Activated CD4-positive, alpha-beta T cell treated with anti-CD3 and anti-CD28 coated beads for 36 hours (primary cell): ENCODE measurements at regions of chr14 and their contacts with region 1.

Region 1: DNA sequence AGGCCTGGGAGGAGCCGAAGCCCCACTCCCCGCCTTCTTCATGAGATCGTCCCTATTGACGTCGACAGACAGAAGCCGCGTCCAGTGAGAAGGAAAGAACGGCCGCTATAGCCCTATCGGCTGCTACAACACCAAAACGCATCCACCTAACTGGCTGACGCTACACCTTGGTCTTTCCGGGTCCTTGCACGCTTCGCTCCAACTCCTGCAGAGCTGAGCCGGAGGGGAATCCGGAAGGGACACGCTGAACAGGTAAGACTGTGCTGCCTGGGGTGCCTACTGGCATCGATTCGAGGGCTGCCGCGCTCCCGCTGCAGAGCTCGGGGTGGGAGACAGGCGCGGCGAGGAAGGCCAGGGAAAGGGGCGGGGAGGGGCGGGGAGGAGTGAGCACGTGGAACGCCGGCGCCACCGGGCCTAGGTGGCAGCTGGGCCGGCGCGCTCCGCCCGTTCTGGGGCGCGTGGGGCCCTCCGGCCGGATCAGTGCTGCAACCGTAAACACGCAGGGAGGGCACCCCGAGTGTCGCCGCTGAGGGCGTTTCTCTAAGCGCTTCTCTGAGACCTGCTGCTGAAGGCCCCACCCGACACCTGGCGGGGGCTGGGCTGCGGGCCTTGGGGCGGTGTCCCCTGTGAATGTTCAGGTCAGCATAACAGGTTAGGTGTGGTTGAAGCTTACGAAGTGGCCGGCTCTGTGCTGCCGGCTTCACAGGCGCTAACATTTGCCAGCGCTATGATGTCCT is at the start of gene DCAF4:
- DNase-seq: peak; percentile 96
- ATAC-seq: peak; percentile 99
- H3K4me3 Mint-ChIP-seq: peak within 1 kb of the TSS; percentile 89
- H3K27ac Mint-ChIP-seq: peak within 1 kb of the TSS; percentile 87
- H3K4me1 Mint-ChIP-seq: peaks cover 11% of the 10 kb centered on the region
- H3K27me3 Mint-ChIP-seq: no peaks in the 10 kb centered on the region
- total RNA-seq, gene DCAF4: 16.0 to 21.7 TPM

Region 2: DNA sequence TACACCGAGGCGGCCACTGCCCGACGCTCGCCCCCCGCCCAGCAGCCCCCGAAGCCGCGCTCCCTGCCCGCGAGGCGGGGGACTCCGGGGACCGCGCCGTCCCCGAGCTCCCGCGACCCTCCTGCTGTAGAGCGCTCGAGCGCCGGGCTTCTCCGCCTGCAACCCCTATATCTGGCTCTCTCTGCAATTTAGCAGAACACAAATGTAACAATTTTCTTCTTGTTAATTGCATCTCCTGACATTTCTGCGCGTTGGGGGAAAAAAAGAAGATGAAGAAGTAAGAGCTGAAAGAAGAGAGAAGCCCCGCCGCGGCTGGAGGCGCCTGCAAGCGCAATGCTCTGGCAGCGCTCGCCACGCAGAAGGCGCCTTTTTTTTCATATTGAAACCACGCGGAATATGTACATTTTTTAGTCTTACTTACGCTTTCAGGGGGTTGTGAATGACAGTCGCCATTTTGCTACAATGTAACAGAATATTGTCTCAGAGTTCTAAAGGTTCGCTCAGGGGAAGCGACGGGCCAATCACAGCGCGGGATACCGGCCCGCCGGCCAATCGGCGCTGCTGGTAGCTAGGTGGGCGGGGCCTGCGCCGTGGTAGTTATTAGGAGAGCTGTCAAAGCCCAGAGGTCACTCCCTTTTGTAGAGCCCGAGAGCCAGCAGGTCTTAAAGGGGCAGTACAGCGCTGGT is 32.7 kb before region 1 on chr14 and contains the start of gene DPF3:
- CTCF ChIA-PET with region 1: interaction called, 3 read pairs
- POLR2A ChIA-PET with region 1: no interaction called
- intact Hi-C with region 1: loop called (anchors 1 kb)
- DNase-seq: peak; percentile 94
- ATAC-seq: peak; percentile 99
- H3K4me3 Mint-ChIP-seq: peak within 1 kb of the TSS; percentile 78
- H3K27ac Mint-ChIP-seq: peak within 1 kb of the TSS; percentile 55
- H3K4me1 Mint-ChIP-seq: peaks cover 17% of the 10 kb centered on the region
- H3K27me3 Mint-ChIP-seq: peaks cover 43% of the 10 kb centered on the region
- total RNA-seq, gene DPF3: 0.25 to 0.39 TPM

Region 3: DNA sequence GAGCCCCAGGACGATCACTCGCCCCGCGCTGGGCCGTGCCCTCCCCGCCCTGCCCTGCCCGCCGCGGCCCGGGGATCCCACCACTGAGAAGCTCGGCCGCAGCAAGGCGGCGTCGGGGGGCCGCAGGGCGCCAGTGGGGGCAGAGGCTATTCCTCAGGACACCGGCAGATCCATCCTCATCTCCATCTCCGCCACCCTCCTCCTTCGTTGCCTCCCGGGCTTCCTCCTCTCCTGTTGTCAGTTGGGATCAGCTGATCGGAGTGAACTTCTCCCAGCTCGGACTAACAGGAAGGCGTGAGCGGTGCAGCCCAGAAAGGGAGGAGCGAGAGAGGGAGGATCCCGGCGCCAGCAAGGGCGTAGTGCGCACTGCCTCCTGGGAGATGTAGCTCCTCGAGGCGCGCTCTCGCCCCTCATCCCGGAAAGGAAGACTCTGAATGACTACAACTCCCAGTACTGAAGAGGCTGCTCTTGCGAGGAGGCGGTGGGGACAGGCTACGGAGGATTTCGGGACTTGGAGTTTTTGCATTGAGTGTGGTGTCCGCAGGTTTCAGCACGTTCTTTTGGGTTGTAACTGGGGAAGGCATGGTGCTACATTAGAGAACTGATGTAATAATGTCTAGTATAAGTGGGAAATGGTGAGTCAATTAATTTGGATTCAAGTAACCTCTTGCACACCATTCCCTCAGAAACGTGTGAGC is 100.5 kb after region 1 on chr14 and contains the start of gene ZFYVE1:
- CTCF ChIA-PET with region 1: no interaction called
- POLR2A ChIA-PET with region 1: no interaction called
- intact Hi-C with region 1: loop called in 1 of 2 experiments (anchors 1 kb)
- DNase-seq: peak; percentile 96
- ATAC-seq: peak; percentile 100
- H3K4me3 Mint-ChIP-seq: peak within 1 kb of the TSS; percentile 84
- H3K27ac Mint-ChIP-seq: peak within 1 kb of the TSS; percentile 87
- H3K4me1 Mint-ChIP-seq: peaks cover 35% of the 10 kb centered on the region
- H3K27me3 Mint-ChIP-seq: no peaks in the 10 kb centered on the region
- total RNA-seq, gene ZFYVE1: 8.3 to 9.4 TPM

Region 4: DNA sequence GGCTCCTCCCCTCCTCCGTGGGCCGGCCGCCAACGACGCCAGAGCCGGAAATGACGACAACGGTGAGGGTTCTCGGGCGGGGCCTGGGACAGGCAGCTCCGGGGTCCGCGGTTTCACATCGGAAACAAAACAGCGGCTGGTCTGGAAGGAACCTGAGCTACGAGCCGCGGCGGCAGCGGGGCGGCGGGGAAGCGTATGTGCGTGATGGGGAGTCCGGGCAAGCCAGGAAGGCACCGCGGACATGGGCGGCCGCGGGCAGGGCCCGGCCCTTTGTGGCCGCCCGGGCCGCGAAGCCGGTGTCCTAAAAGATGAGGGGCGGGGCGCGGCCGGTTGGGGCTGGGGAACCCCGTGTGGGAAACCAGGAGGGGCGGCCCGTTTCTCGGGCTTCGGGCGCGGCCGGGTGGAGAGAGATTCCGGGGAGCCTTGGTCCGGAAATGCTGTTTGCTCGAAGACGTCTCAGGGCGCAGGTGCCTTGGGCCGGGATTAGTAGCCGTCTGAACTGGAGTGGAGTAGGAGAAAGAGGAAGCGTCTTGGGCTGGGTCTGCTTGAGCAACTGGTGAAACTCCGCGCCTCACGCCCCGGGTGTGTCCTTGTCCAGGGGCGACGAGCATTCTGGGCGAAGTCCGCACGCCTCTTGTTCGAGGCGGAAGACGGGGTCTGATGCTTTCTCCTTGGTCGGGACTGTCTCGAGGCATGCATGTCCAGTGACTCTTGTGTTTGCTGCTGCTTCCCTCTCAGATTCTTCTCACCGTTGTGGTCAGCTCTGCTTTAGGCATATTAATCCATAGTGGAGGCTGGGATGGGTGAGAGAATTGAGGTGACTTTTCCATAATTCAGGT is 210.1 kb after region 1 on chr14 and contains the start of gene PSEN1:
- CTCF ChIA-PET with region 1: no interaction called
- POLR2A ChIA-PET with region 1: no interaction called
- intact Hi-C with region 1: loop called in 1 of 2 experiments (anchors 1 kb)
- DNase-seq: peak; percentile 99
- ATAC-seq: peak; percentile 95
- H3K4me3 Mint-ChIP-seq: peak within 1 kb of the TSS; percentile 86
- H3K27ac Mint-ChIP-seq: peak within 1 kb of the TSS; percentile 82
- H3K4me1 Mint-ChIP-seq: peaks cover 31% of the 10 kb centered on the region
- H3K27me3 Mint-ChIP-seq: no peaks in the 10 kb centered on the region
- total RNA-seq, gene PSEN1: 31.2 to 31.6 TPM